Posterior vena cava (tissue), 2 donors: ENCODE measurements at regions of chr15 and their contacts with region 1.

Region 1: GRCh38 chr15:86183596-86184491 is 104.2 kb downstream of the AGBL1 start:
- DNase-seq: no peak

Region 2: GRCh38 chr15:85646538-85647091 is 537.2 kb before region 1 on chr15:
- intact Hi-C with region 1: loop called in 1 of 2 experiments (anchors 10 kb)
- DNase-seq: no peak

Region 3: GRCh38 chr15:85920956-85921355 is 262.9 kb before region 1 on chr15:
- intact Hi-C with region 1: no loop called
- DNase-seq: no peak

Region 4: DNA sequence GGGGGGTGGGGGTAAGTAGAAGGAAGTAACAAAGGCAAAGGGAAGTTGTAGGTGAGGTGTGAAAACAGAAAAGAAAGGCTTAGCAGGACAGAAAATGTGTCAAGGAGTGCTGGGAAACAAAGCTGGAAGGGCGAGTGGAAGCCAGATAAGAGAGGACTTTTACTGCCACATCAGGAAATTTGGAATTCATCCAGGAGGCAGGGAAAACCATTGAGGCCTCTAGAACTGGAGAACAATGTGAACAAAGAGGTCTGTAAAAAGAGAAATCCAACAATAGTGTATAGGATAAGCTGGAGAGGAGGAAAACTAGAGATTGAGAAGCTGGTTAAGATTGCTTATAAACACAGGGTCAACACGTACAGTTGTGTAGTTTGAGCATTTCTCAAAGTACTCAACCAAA is 1956.1 kb after region 1 on chr15:
- intact Hi-C with region 1: loop called in 1 of 2 experiments (anchors 5 kb)
- DNase-seq: no peak